ENCODE measurements at regions of chr6 and their contacts with region 1.

Region 1: DNA sequence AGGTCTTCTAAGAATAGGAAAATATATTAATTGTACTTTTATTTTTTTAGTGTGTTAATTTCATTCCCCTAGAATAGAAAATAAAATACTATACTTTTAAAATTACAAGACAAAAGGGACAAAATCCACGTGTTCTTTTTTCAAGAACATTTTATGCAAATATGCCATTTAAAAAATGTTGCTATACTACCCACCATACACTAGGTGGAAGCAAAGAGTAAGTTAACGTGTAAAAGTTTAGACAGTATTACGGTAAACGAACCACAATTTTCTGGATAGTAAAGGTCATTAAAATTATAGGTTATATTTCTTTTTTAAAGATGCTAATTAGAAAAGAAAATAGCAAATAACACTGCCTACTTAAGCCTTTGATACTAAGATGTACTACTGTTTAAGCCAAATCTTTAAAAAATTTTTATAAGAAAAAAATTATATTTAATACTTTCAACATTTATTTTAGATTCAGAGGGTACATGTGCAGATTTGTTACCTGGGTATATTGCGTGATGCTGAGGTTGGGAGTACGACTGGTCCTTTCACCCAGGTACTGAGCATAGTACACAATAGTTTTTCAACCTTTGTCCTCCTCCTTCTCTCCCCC is 287.6 kb downstream of the PHF3 start:
- DNase-seq: no peak

Region 2: GRCh38 chr6:64325093-64325492 is 401.9 kb after region 1 on chr6:
- intact Hi-C with region 1: loop called (anchors 10 kb)
- DNase-seq: no peak